H1 (cell line): ENCODE measurements at regions of chr20 and their contacts with region 1.

Region 1: DNA sequence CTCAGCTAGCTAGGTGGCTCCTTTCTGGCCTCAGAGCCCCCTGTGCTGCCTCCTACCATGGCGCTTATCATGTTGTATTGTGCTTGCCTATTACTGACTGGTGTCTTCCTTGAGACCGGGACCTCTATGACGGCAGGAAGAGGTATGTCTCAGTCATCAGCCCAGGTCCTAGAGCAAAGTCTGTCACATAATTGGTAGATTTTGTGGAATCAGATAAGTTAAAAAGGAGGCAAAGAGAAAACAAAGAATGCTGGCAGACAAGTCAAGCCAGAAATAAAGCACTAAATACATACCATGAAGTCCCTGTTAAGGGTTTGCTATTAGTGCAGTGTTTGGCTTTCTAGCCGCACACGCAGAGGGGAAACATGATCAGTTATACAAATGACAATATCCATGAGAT is 6.0 kb downstream of the TOMM34 start:
- DNase-seq: no peak
- H3K4me3 ChIP-seq: no peak overlapping the region
- H3K27ac ChIP-seq: no peak overlapping the region
- H3K4me1 ChIP-seq: peaks cover 0 to 2% (median 0%) of the 10 kb centered on the region in 4 experiments; a peak in 3 of 7 replicates
- H3K27me3 ChIP-seq: no peaks in the 10 kb centered on the region
- CTCF ChIP-seq: no peak
- EP300 ChIP-seq: no peak
- POLR2A ChIP-seq: no peak
- RAD21 ChIP-seq: no peak

Region 2: DNA sequence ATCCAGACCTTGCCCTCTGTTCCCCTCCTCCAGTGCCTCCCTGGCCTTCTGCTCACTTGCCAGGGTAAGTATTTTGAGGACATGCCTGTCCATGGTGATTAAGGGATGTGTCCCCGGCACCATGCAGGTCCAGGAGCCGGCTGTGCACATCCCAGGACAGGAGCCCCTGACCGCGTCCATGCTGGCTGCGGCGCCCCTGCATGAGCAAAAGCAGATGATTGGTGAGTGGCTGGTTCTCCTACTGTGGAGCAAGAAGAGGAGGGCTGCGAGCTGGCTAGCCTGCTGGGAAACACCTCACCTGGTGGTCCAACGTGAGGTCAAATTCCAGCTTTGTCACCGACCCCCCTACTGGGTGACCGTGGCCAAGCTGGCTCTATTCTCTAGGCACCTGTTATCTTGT is 17.7 kb before region 1 on chr20:
- CTCF ChIA-PET with region 1: interaction called, 25 read pairs
- POLR2A ChIA-PET with region 1: interaction called, 33 read pairs
- DNase-seq: no peak
- H3K4me3 ChIP-seq: no peak overlapping the region
- H3K27ac ChIP-seq: no peak overlapping the region
- H3K4me1 ChIP-seq: no peaks in the 10 kb centered on the region
- H3K27me3 ChIP-seq: no peaks in the 10 kb centered on the region
- CTCF ChIP-seq: no peak
- EP300 ChIP-seq: no peak
- POLR2A ChIP-seq: no peak
- RAD21 ChIP-seq: no peak

Region 3: GRCh38 chr20:44942264-44942973 is 11.7 kb before region 1 on chr20:
- CTCF ChIA-PET with region 1: interaction called, 25 read pairs
- POLR2A ChIA-PET with region 1: interaction called, 33 read pairs
- DNase-seq: no peak
- H3K4me3 ChIP-seq: no peak overlapping the region
- H3K27ac ChIP-seq: no peak overlapping the region
- H3K4me1 ChIP-seq: no peaks in the 10 kb centered on the region
- H3K27me3 ChIP-seq: no peaks in the 10 kb centered on the region
- CTCF ChIP-seq: peak; percentile 10 to 36 (median 31); a peak in 3 of 4 replicates
- EP300 ChIP-seq: no peak
- POLR2A ChIP-seq: no peak
- RAD21 ChIP-seq: no peak